Left colon (tissue), 2 donors: ENCODE measurements at regions of chr16 and their contacts with region 1.

Region 1: DNA sequence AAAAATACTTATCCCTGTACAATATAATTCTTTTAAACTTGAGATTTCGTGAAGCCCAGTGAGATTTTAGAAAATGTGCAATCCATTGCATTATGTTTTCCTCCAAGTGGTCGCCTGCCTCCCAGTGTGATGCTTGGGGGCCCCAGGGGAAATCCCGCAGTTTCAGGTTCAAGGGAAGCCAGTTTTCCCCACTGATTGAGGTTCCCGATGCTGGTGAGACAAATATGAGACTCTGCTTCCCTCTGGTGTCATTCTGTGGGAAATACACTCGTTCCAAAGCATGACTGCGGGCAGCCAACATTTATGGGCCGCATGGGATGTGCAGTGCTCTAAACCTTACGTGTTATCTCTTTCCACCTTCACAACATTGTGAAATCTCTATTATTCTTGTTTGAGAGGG is 200.8 kb downstream of the PRKCB start:
- DNase-seq: peak; percentile 25 to 29
- ATAC-seq: peak; percentile 88

Region 2: DNA sequence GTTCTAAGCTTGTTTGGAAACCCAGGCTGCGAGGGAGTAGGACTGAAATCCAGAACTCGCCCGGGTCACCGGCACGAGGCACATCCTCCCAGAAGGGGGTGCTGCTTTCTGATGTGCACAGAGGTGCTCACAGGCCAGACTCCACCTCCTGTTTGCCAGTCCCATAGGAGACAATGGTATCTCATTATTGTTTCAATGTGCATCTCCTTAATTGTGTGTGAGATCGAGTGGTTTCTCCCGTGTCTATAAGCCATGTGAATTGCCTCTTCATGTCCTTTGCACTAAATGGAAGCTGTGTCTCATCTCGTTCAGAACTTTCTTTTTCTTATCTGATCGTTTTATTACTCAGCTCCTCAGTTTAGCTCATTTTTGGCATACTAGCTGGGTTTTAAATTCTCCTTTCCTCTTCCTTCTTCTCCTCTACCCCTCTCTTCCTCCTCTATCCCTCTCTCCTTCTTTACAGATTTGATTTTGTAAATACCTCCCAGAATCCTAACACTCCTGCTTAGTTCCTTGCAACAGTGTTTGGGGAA is 233.0 kb before region 1 on chr16:
- intact Hi-C with region 1: loop called in 1 of 2 experiments (anchors 10 kb)
- DNase-seq: peak; percentile 72 to 79
- ATAC-seq: peak; percentile 83